ENCODE measurements at regions of chr12 and their contacts with region 1.

Region 1: GRCh38 chr12:59808317-59808910 is 212.6 kb downstream of the SLC16A7 start:
- DNase-seq: no peak
- ATAC-seq: peak; percentile 58 to 82

Region 2: DNA sequence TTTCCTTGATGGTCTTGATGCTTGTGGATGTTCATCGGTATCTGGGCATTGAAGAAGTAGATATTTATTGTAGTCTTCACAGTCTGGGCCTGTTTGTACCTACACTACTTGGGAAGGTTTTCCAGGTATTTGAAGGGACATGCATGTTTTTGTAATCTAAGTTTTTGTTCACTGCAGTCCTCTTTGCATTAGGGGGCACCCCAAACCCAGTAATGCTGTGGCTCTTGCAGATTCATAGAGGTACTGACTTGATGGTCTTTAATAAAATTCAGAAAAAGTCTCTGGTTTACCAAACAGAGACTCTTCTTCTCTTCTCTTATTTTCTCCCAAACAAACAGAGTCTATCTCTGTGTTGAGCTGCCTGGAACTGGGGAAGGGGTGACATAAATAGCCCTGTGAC is 363.5 kb before region 1 on chr12:
- intact Hi-C with region 1: loop called in 1 of 2 experiments (anchors 10 kb)
- DNase-seq: no peak
- ATAC-seq: no peak

Region 3: DNA sequence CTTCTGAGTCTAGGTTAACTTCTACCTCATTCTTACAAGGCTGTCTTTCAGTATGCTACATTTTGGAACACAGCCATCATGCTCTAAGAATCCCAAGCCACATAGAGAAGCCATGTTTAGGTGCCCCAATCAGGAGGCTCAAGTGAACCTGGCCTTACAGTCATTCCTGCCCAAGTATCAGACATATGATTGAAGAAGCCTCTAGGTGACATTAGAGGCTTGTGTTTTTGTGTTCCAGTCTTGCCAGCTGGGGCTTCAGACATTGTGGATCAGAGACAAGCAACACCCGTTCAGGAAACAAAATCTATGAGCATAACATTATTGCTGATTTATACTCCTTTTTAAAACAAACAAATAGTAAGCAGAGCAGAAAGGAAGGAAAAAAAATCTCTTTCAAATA is 220.7 kb before region 1 on chr12:
- intact Hi-C with region 1: loop called in 1 of 2 experiments (anchors 5 kb)
- DNase-seq: no peak
- ATAC-seq: no peak

Measured in left cardiac atrium (tissue), 4 donors.